Sigmoid colon (tissue), 7 donors: ENCODE measurements at regions of chr2 and their contacts with region 1.

Region 1: GRCh38 chr2:189412330-189412953 is 28.8 kb upstream of the WDR75 start:
- DNase-seq: peak; percentile 70
- H3K4me3 ChIP-seq: no peak overlapping the region
- H3K27ac ChIP-seq: peak overlapping the region; percentile 71 to 84 (median 82)
- H3K4me1 ChIP-seq: peaks cover 0 to 53% (median 36%) of the 10 kb centered on the region in 4 donors
- H3K27me3 ChIP-seq: no peaks in the 10 kb centered on the region
- CTCF ChIP-seq: peak; percentile 66 to 78 (median 68)
- EP300 ChIP-seq: no peak
- POLR2A ChIP-seq: no peak

Region 2: DNA sequence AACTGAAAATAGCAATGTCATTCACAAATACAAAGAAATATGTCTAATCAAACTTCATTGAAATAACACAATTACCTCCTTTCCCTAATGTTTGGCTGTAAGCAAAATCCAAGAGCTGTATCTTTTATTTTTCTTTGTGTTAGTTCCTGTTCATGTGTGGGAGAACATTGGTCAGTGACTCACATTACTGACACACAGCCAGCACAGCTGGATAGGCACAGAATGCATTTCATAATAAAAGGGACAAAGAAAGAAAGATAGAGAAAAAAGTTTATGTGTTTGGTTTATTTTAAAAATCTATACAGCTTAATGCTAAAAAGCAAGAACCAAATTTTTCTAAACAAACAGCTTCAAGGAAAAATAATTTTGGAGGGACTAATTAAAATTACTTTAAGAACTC is 623.8 kb before region 1 on chr2:
- intact Hi-C with region 1: loop called (anchors 10 kb)
- DNase-seq: peak; percentile 91
- H3K4me3 ChIP-seq: peak overlapping the region in 1 of 4 donors; percentile 18
- H3K27ac ChIP-seq: peak overlapping the region; percentile 76 to 87 (median 84)
- H3K4me1 ChIP-seq: peaks cover 0 to 50% (median 33%) of the 10 kb centered on the region in 4 donors
- H3K27me3 ChIP-seq: no peaks in the 10 kb centered on the region
- CTCF ChIP-seq: no peak
- EP300 ChIP-seq: no peak
- POLR2A ChIP-seq: no peak

Region 3: DNA sequence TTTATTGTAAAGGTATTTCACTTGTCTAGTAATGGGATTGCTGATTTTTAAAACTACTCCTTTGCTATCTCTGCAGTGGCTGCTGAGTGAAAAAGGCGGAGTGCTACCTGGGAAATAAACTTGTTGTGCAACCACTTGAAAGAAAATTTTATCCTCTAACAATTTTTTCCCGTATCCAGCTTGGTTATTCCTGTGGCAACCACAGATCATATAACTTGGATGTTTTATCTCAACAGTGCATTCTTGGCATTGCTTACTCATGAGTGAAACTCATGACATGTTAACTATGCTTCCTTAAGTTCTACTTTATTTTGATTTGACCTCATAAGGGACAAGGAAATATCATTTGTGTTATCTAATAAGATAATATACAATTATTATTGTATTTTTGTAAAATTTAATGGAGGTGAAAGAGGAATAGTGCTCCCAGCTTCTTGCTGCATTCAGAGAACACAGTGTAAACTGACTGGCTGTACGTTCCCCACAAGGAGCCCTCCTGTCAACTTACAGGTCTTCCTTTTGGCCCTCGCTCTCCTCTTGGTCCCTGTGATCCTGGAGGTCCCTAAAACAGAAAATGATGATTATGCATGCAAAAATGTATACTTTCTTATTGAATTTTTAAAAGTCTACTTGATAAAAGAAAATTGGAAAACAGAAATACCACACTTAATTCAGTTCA is 315.5 kb before region 1 on chr2:
- intact Hi-C with region 1: loop called (anchors 2 kb)
- DNase-seq: no peak
- H3K4me3 ChIP-seq: no peak overlapping the region
- H3K27ac ChIP-seq: peak overlapping the region in 3 of 4 donors; percentile 38 to 67 (median 65)
- H3K4me1 ChIP-seq: peaks cover 0 to 58% (median 44%) of the 10 kb centered on the region in 4 donors
- H3K27me3 ChIP-seq: no peaks in the 10 kb centered on the region
- CTCF ChIP-seq: no peak
- EP300 ChIP-seq: no peak
- POLR2A ChIP-seq: no peak

Region 4: DNA sequence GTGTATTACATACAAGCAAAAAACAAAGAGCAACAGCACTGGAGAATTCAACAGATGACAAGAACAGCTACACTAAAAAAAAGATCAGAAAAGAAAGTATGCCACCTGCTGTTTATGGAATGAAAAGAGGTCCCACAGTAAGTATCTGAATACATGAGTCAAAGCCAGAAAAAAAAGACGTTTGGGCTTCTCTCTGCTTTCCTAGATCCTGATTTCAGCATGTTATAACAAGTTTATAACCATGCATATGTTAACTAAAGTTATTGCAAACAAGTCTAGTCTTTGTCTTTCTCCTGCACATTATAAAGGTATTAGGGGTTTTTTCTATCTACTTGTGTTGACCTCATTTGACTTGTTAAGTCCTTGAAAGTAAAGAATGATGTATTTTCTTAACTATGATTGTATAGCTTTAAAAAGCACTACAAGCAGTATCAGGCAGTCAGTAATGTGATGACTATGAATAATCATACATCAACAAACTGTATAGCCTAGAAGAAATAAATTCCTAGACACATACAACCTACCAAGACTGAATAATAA is 124.4 kb before region 1 on chr2:
- intact Hi-C with region 1: loop called (anchors 5 kb)
- DNase-seq: no peak
- H3K4me3 ChIP-seq: no peak overlapping the region
- H3K27ac ChIP-seq: peak overlapping the region in 2 of 4 donors; percentile 37 to 67
- H3K4me1 ChIP-seq: peaks cover 0 to 34% (median 25%) of the 10 kb centered on the region in 4 donors
- H3K27me3 ChIP-seq: no peaks in the 10 kb centered on the region
- CTCF ChIP-seq: peak; percentile 38 to 52 (median 50)
- EP300 ChIP-seq: no peak
- POLR2A ChIP-seq: no peak

Region 5: DNA sequence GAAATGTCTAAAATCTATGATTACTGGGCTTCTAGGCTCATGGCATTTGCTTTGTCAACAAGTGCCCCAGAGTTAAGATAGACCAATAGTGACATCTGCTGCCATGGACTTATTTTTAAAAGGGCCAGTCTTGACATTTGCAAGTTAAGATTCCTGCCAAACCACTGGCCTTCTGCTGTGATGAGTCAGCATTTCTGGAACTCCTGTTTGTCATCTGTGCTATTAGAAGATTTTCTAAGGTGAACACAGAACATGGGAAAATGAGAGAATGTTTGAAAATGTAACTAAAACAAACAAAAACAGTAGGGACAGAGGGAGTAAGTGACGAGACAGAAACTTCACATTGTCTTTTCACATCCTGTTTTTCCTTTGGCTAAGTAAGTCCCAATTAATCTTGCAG is 64.9 kb before region 1 on chr2:
- intact Hi-C with region 1: loop called (anchors 5 kb)
- DNase-seq: no peak
- H3K4me3 ChIP-seq: no peak overlapping the region
- H3K27ac ChIP-seq: peak overlapping the region; percentile 46 to 78 (median 70)
- H3K4me1 ChIP-seq: peaks cover 0 to 62% (median 49%) of the 10 kb centered on the region in 4 donors
- H3K27me3 ChIP-seq: no peaks in the 10 kb centered on the region
- CTCF ChIP-seq: no peak
- EP300 ChIP-seq: no peak
- POLR2A ChIP-seq: no peak

Region 6: GRCh38 chr2:190636373-190636772 is 1223.9 kb after region 1 on chr2:
- intact Hi-C with region 1: no loop called
- DNase-seq: no peak
- H3K4me3 ChIP-seq: no peak overlapping the region
- H3K27ac ChIP-seq: peak overlapping the region; percentile 64 to 81 (median 70)
- H3K4me1 ChIP-seq: peaks cover 0 to 29% (median 20%) of the 10 kb centered on the region in 4 donors
- H3K27me3 ChIP-seq: no peaks in the 10 kb centered on the region
- CTCF ChIP-seq: no peak
- EP300 ChIP-seq: no peak
- POLR2A ChIP-seq: no peak